ENCODE measurements at regions of chr3 and their contacts with region 1.

Region 1: DNA sequence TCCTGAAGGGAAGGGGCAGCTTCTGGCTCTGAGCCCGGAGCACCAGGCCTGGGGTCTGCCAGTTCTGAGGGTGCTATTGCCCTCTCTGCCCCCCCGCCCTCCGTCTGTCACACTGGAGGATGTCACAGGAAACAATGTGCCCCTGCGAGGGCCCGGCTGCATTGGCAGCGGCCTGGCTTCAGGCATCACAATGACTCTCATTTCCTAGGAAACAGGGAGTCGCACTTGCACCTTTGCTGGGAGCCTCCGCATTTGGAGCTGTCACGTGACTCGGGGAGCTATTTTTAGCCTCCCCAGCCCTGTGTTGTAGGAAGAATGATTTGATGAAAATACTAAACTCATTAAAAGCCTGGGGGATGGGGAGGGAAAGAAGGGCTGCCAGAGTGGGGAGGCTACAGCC is 518.9 kb downstream of the SHQ1 start:
- DNase-seq: peak; percentile 54 to 95 (median 74)

Region 2: GRCh38 chr3:71599416-71599815 is 729.9 kb before region 1 on chr3:
- intact Hi-C with region 1: no loop called
- DNase-seq: no peak

Region 3: GRCh38 chr3:72289692-72290071 is 39.7 kb before region 1 on chr3:
- intact Hi-C with region 1: loop called (anchors 5 kb)
- DNase-seq: peak in 1 of 10 donors; percentile 32

Measured in posterior cingulate gyrus (tissue), 11 donors.